Astrocyte of the cerebellum (primary cell): ENCODE measurements at regions of chr2 and their contacts with region 1.

Region 1: GRCh38 chr2:20242060-20243006 is 17.4 kb upstream of the SDC1 start:
- DNase-seq: no peak
- H3K4me3 ChIP-seq: no peak overlapping the region
- CTCF ChIP-seq: peak; percentile 40

Region 2: DNA sequence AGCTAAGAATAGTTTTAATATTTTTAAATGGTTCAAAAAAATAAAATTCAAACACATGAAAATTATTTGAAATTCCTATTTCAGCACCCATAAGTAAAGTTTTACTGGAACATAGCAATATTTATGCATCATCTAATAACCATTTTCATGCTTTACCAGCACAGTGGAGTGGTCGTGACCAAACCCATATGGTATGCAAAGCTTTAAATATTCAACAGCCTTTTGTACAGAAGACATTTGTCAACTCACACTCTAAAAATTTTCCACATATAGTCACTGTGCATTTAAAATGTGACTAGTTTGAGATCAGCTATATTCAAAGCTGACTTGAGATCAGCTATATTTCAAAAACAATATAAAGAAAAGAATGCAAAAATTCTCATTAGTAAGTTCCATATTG is 62.1 kb after region 1 on chr2:
- in situ Hi-C with region 1: loop called (anchors 5 kb)
- DNase-seq: peak; percentile 20
- H3K4me3 ChIP-seq: no peak overlapping the region
- CTCF ChIP-seq: no peak